CD8-positive, alpha-beta T cell (primary cell): ENCODE measurements at regions of chr3 and their contacts with region 1.

Region 1: DNA sequence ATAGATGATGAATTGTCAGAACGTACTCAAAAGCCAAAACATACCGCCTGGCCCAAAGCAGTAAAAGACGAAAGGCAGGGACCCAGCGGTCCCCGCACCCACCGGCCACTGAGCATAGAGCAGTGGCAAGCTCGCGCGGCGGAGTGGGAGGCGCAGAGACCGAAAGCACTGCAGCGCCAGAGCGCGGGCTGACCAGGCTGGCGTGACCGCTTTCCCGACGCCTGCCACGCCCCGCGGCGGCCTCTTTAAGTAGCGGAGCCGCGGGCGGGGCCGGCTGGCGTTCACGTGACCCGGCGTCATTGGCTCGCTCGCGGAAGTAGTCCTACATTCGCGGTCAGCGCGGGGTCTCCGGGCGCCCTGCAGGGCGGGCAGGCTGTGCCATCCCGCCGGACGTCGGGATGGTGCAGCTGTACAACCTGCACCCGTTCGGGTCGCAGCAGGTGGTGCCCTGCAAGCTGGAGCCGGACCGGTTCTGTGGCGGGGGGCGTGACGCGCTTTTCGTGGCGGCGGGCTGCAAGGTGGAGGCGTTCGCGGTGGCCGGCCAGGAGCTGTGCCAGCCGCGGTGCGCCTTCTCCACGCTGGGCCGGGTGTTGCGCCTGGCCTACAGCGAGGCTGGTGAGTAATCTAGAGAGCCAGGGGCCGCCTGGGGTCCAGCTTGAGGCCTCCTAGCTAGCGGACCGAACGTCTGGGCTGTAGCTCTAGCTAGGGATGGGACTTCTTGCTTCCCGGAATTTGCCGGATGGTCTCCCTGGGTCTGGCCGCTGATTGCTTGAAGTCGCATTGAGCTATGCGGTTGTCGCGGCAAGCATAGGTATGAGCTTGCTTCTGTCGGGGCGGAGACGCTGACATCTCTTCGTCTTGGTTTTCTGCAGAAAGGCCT is at the start of gene HPS3:
- DNase-seq: peak; percentile 52 to 91 (median 79)
- ATAC-seq: peak; percentile 80
- H3K4me3 ChIP-seq: peak within 1 kb of the TSS; percentile 96 to 97
- H3K4me3 Mint-ChIP-seq: peak within 1 kb of the TSS; percentile 96
- H3K27ac ChIP-seq: peak within 1 kb of the TSS; percentile 72 to 80
- H3K27ac Mint-ChIP-seq: peak within 1 kb of the TSS; percentile 89
- H3K4me1 ChIP-seq: peaks cover 28% of the 10 kb centered on the region
- H3K4me1 Mint-ChIP-seq: peaks cover 53% of the 10 kb centered on the region
- H3K27me3 ChIP-seq: peaks cover 0 to 3% of the 10 kb centered on the region in 2 experiments
- H3K27me3 Mint-ChIP-seq: peaks cover 2% of the 10 kb centered on the region
- CTCF ChIP-seq: no peak
- total RNA-seq, gene HPS3: 5.8 to 6.4 TPM

Region 2: DNA sequence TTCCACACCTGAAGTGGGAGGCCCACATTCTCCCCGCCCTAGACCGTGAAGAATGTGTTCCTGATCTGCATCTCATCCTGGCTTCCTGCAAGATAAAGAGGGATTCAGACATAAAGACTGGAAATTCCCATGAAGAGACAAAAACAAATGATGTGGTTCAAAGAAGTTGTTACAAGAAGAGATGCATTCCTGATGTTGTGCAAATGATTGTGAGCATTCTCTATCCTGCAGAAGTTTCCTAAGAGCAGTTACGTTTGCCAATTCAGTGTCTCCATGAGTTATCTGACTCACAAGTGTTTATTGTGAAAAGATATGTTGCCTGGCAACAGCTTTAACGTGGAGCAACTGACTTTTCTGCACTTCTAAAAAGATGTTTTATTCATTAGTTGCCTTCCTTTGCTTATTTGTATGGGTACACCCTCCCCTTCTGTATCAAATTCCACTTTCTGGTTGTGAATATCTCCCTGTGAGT is 1831.0 kb before region 1 on chr3:
- CTCF ChIA-PET with region 1: no interaction called
- POLR2A ChIA-PET with region 1: no interaction called
- intact Hi-C with region 1: no loop called
- DNase-seq: no peak
- ATAC-seq: no peak
- H3K4me3 ChIP-seq: no peak overlapping the region
- H3K4me3 Mint-ChIP-seq: no peak overlapping the region
- H3K27ac ChIP-seq: no peak overlapping the region
- H3K27ac Mint-ChIP-seq: no peak overlapping the region
- H3K4me1 ChIP-seq: no peaks in the 10 kb centered on the region
- H3K4me1 Mint-ChIP-seq: no peaks in the 10 kb centered on the region
- H3K27me3 ChIP-seq: no peaks in the 10 kb centered on the region
- H3K27me3 Mint-ChIP-seq: no peaks in the 10 kb centered on the region
- CTCF ChIP-seq: no peak

Region 3: DNA sequence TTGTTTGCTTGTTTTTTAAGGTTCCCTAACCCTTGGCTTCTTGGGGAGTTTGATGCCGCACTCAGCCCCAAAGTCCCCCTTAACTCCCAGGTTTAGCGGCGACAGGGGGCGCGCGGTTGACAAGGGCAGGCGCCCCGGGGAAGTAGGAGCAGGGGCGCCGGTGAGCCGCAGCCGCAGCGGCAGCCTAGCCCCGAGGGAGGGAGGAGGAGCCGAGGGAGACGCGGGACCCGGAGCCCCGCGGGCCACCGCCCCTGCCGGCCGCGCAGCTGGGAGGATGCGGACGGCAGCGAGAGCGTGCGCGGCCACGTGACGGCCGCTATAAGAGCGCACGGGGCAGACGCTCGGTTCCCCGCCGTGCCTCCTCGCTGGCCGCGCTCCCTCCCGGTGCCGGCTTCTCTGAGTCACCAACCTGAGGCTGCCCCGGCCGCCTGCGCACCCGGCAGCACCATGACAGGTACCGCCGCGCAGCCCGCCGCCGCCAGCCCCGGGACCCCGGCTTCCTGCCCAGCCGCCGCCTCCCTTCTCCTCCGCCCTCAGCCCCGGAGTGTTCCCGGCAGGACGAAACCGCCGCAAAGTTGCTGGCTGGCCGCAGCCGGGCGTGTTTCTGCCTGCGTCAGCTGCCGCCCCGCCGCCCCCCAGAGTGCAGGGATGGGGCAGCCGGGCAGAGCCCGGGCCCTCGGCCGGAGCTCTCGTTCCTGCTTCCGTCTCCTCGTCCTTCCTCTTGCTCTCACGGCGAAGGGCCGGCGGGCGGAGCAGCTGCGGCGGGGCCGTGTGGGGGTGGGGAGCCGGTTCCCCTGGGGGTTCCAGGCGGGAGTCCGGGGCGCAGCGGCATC is 138.2 kb before region 1 on chr3 and contains the start of gene GYG1:
- CTCF ChIA-PET with region 1: no interaction called
- POLR2A ChIA-PET with region 1: interaction called, 16 read pairs
- intact Hi-C with region 1: loop called in 1 of 2 experiments (anchors 1 kb)
- DNase-seq: peak; percentile 59 to 94 (median 79)
- ATAC-seq: peak; percentile 81
- H3K4me3 ChIP-seq: peak within 1 kb of the TSS; percentile 46 to 66
- H3K4me3 Mint-ChIP-seq: peak within 1 kb of the TSS; percentile 80
- H3K27ac ChIP-seq: peak within 1 kb of the TSS; percentile 69 to 79
- H3K27ac Mint-ChIP-seq: peak within 1 kb of the TSS; percentile 84
- H3K4me1 ChIP-seq: peaks cover 18% of the 10 kb centered on the region
- H3K4me1 Mint-ChIP-seq: peaks cover 35% of the 10 kb centered on the region
- H3K27me3 ChIP-seq: no peaks in the 10 kb centered on the region
- H3K27me3 Mint-ChIP-seq: no peaks in the 10 kb centered on the region
- CTCF ChIP-seq: peak; percentile 45
- total RNA-seq, gene GYG1: 29.4 to 35.2 TPM

Region 4: GRCh38 chr3:149067883-149068282 is 61.7 kb before region 1 on chr3:
- CTCF ChIA-PET with region 1: no interaction called
- POLR2A ChIA-PET with region 1: no interaction called
- intact Hi-C with region 1: no loop called
- DNase-seq: no peak
- ATAC-seq: no peak
- H3K4me3 ChIP-seq: no peak overlapping the region
- H3K4me3 Mint-ChIP-seq: no peak overlapping the region
- H3K27ac ChIP-seq: no peak overlapping the region
- H3K27ac Mint-ChIP-seq: no peak overlapping the region
- H3K4me1 ChIP-seq: no peaks in the 10 kb centered on the region
- H3K4me1 Mint-ChIP-seq: no peaks in the 10 kb centered on the region
- H3K27me3 ChIP-seq: no peaks in the 10 kb centered on the region
- H3K27me3 Mint-ChIP-seq: no peaks in the 10 kb centered on the region
- CTCF ChIP-seq: no peak

Region 5: GRCh38 chr3:149086232-149086988 is 43.2 kb before region 1 on chr3 and contains the start of gene HLTF:
- CTCF ChIA-PET with region 1: no interaction called
- POLR2A ChIA-PET with region 1: interaction called, 3 read pairs
- intact Hi-C with region 1: loop called (anchors 1 to 2 kb)
- DNase-seq: peak; percentile 82 to 97 (median 92)
- ATAC-seq: peak; percentile 98
- H3K4me3 ChIP-seq: peak within 1 kb of the TSS; percentile 87 to 94
- H3K4me3 Mint-ChIP-seq: peak within 1 kb of the TSS; percentile 99
- H3K27ac ChIP-seq: peak within 1 kb of the TSS; percentile 57 to 63
- H3K27ac Mint-ChIP-seq: peak within 1 kb of the TSS; percentile 92
- H3K4me1 ChIP-seq: peaks cover 13% of the 10 kb centered on the region
- H3K4me1 Mint-ChIP-seq: peaks cover 21% of the 10 kb centered on the region
- H3K27me3 ChIP-seq: no peaks in the 10 kb centered on the region
- H3K27me3 Mint-ChIP-seq: no peaks in the 10 kb centered on the region
- CTCF ChIP-seq: no peak
- total RNA-seq, gene HLTF: 4.6 to 6.3 TPM

Region 6: DNA sequence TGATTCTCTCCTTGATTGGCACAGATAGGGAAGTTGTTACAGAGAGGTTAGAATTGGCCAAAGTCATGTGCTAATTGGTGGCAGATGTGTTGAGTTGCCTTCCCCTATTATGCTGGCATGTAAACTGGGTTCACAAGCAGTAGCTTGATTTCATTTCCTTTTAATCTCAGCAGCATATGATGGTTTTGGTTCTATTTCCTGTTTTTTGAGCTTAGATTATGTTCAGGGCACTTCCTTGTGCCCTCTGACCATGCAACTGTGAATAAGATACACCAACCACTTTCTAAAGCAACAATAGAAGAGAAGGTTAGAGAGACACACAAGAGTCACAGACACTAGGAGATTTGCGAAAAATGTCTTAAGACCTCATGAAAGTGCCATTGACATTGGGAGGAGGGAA is 16.4 kb after region 1 on chr3:
- CTCF ChIA-PET with region 1: no interaction called
- POLR2A ChIA-PET with region 1: interaction called, 13 read pairs
- intact Hi-C with region 1: no loop called
- DNase-seq: peak in 2 of 9 experiments; percentile 8 to 49
- ATAC-seq: peak; percentile 51
- H3K4me3 ChIP-seq: no peak overlapping the region
- H3K4me3 Mint-ChIP-seq: no peak overlapping the region
- H3K27ac ChIP-seq: peak overlapping the region in 1 of 2 experiments; percentile 36
- H3K27ac Mint-ChIP-seq: no peak overlapping the region
- H3K4me1 ChIP-seq: peaks cover 18% of the 10 kb centered on the region
- H3K4me1 Mint-ChIP-seq: peaks cover 10% of the 10 kb centered on the region
- H3K27me3 ChIP-seq: no peaks in the 10 kb centered on the region
- H3K27me3 Mint-ChIP-seq: no peaks in the 10 kb centered on the region
- CTCF ChIP-seq: no peak

Region 7: DNA sequence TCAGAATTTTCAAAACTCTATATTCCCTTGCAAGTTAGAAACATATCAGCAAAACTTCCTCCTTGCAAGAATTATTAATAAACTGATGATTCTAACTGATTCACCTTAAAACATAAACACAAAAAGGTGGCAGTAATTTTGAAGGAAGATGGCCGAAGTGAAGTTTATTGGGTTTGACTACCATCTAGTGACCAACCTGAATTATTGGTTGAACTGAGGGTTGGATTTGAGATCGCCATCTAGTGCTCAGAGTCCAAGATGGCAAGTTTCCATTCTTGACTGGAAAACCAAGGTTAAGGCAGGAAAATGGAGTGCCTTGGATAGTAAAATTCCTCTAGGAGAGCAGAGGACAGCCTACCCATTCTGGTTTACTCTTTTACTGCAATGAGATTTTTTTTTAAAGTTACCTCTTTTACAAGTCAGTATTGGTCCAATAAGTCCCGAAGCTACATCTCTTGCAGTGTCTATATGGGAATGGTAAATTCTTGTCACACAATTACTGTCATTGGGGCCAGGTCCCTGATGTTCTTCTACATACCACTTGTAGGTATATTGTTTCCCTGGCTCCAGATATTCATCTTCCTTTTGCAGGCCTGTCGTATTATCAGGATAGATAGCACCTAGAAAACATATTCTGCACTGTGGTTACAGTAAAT is 143.7 kb after region 1 on chr3:
- CTCF ChIA-PET with region 1: interaction called, 8 read pairs
- POLR2A ChIA-PET with region 1: interaction called, 4 read pairs
- intact Hi-C with region 1: loop called in 1 of 2 experiments (anchors 2 kb)
- DNase-seq: peak in 3 of 9 experiments; percentile 22 to 85 (median 76)
- ATAC-seq: peak; percentile 86
- H3K4me3 ChIP-seq: no peak overlapping the region
- H3K4me3 Mint-ChIP-seq: no peak overlapping the region
- H3K27ac ChIP-seq: no peak overlapping the region
- H3K27ac Mint-ChIP-seq: no peak overlapping the region
- H3K4me1 ChIP-seq: peaks cover 13% of the 10 kb centered on the region
- H3K4me1 Mint-ChIP-seq: peaks cover 12% of the 10 kb centered on the region
- H3K27me3 ChIP-seq: no peaks in the 10 kb centered on the region
- H3K27me3 Mint-ChIP-seq: no peaks in the 10 kb centered on the region
- CTCF ChIP-seq: peak; percentile 89

Region 8: DNA sequence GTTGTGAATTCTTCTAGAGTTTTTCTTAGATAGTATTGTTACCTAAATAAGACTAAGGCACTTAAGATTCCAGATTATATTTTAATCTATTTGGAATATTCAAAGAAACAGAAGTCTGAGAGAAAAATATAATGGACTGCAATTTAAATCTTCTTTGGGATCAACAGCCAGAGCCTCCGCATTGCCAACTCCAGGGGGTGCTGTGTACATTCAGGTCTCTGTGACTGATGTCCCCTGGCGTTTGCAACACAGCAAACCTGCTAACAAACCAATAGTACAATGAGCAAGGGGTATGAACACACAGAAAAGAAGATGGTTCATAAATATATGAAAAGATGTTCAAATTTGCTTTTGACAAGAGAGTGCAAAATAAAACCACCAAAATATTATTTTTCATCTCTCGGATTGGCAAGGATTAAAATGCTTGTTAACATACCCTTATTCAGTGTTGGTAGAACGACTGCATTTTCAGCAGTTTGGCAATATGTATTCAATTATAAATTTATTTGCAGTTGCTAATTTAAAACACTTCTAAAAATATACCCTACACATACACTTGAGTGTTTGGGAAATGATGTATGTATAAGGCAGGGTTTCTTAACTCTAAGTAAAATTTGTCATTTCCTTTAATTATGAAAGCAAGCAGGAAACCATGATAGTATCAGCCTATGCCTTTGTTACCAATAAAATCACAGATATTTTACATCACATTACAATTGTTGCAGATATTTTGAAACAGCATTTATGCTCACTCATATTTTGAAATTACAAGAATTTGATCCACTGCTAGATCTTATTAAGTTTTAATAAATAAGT is 264.0 kb after region 1 on chr3:
- CTCF ChIA-PET with region 1: no interaction called
- POLR2A ChIA-PET with region 1: no interaction called
- intact Hi-C with region 1: no loop called
- DNase-seq: peak in 2 of 9 experiments; percentile 14 to 39
- ATAC-seq: no peak
- H3K4me3 ChIP-seq: no peak overlapping the region
- H3K4me3 Mint-ChIP-seq: no peak overlapping the region
- H3K27ac ChIP-seq: no peak overlapping the region
- H3K27ac Mint-ChIP-seq: no peak overlapping the region
- H3K4me1 ChIP-seq: no peaks in the 10 kb centered on the region
- H3K4me1 Mint-ChIP-seq: no peaks in the 10 kb centered on the region
- H3K27me3 ChIP-seq: no peaks in the 10 kb centered on the region
- H3K27me3 Mint-ChIP-seq: peaks cover 6% of the 10 kb centered on the region
- CTCF ChIP-seq: peak; percentile 31

Region 9: GRCh38 chr3:149480325-149481017 is 350.9 kb after region 1 on chr3:
- CTCF ChIA-PET with region 1: no interaction called
- POLR2A ChIA-PET with region 1: no interaction called
- intact Hi-C with region 1: loop called (anchors 10 kb)
- DNase-seq: peak in 5 of 9 experiments; percentile 7 to 52 (median 17)
- ATAC-seq: no peak
- H3K4me3 ChIP-seq: no peak overlapping the region
- H3K4me3 Mint-ChIP-seq: no peak overlapping the region
- H3K27ac ChIP-seq: no peak overlapping the region
- H3K27ac Mint-ChIP-seq: no peak overlapping the region
- H3K4me1 ChIP-seq: no peaks in the 10 kb centered on the region
- H3K4me1 Mint-ChIP-seq: no peaks in the 10 kb centered on the region
- H3K27me3 ChIP-seq: no peaks in the 10 kb centered on the region
- H3K27me3 Mint-ChIP-seq: peaks cover 10% of the 10 kb centered on the region
- CTCF ChIP-seq: no peak

Region 10: GRCh38 chr3:149596136-149596770 is 466.7 kb after region 1 on chr3:
- CTCF ChIA-PET with region 1: no interaction called
- POLR2A ChIA-PET with region 1: no interaction called
- intact Hi-C with region 1: no loop called
- DNase-seq: no peak
- ATAC-seq: no peak
- H3K4me3 ChIP-seq: no peak overlapping the region
- H3K4me3 Mint-ChIP-seq: no peak overlapping the region
- H3K27ac ChIP-seq: no peak overlapping the region
- H3K27ac Mint-ChIP-seq: no peak overlapping the region
- H3K4me1 ChIP-seq: no peaks in the 10 kb centered on the region
- H3K4me1 Mint-ChIP-seq: no peaks in the 10 kb centered on the region
- H3K27me3 ChIP-seq: no peaks in the 10 kb centered on the region
- H3K27me3 Mint-ChIP-seq: peaks cover 3% of the 10 kb centered on the region
- CTCF ChIP-seq: no peak

Region 11: GRCh38 chr3:149752051-149752787 is 622.7 kb after region 1 on chr3 and contains the start of gene COMMD2:
- CTCF ChIA-PET with region 1: no interaction called
- POLR2A ChIA-PET with region 1: interaction called, 7 read pairs
- intact Hi-C with region 1: loop called (anchors 2 to 5 kb)
- DNase-seq: peak; percentile 49 to 88 (median 68)
- ATAC-seq: peak; percentile 89
- H3K4me3 ChIP-seq: peak within 1 kb of the TSS; percentile 80 to 82
- H3K4me3 Mint-ChIP-seq: peak within 1 kb of the TSS; percentile 97
- H3K27ac ChIP-seq: peak within 1 kb of the TSS; percentile 74 to 79
- H3K27ac Mint-ChIP-seq: peak within 1 kb of the TSS; percentile 97
- H3K4me1 ChIP-seq: peaks cover 20% of the 10 kb centered on the region
- H3K4me1 Mint-ChIP-seq: peaks cover 45% of the 10 kb centered on the region
- H3K27me3 ChIP-seq: no peaks in the 10 kb centered on the region
- H3K27me3 Mint-ChIP-seq: peaks cover 2% of the 10 kb centered on the region
- CTCF ChIP-seq: peak; percentile 55
- total RNA-seq, gene COMMD2: 59.1 to 59.6 TPM